Natural killer cell (primary cell): ENCODE measurements at regions of chr10 and their contacts with region 1.

Region 1: DNA sequence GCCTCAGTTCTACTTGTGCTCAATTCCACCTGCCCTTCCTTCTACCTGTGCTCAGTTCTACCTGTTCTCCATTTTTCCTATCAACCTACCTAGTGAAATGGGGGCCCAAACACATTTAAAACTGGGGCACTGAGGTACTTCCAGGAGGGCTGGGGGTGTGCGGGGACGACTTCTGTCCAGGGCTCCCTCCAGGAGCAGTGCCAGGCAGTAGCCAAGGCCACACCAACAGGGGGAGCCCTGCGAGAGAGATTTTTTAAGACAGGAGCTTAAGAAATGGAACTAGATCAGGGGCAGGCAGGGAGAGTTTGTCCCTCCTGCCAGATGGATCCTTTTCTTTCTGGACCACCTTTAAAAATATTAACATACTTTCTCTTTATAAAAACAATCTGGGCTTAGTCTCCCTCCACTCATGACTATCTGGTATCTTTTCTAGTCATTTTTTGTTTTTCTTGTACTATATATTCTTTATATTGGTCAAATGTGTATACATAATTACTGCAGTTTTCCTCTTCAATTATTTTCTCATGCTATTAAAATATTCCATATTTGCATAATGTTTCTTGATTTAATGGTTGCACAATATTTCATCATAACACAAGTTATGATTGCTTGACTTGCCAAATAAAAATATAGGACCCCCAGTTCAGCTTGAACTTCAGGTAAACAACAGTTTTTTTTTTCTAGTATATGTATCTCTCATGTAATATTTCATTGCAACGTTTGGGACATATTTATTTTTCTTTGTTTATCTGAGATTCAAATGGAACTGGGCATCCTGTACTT is 47.3 kb upstream of the INSYN2A start:
- DNase-seq: peak; percentile 55 to 59
- ATAC-seq: peak; percentile 81 to 93 (median 85)
- H3K4me3 ChIP-seq: no peak overlapping the region
- H3K4me3 Mint-ChIP-seq: no peak overlapping the region
- H3K27ac ChIP-seq: no peak overlapping the region
- H3K27ac Mint-ChIP-seq: peak overlapping the region in 1 of 2 donors; percentile 21
- H3K4me1 ChIP-seq: no peaks in the 10 kb centered on the region
- H3K4me1 Mint-ChIP-seq: peaks cover 21 to 32% of the 10 kb centered on the region in 2 donors
- H3K27me3 ChIP-seq: no peaks in the 10 kb centered on the region
- H3K27me3 Mint-ChIP-seq: peaks cover 4 to 6% of the 10 kb centered on the region in 2 donors
- CTCF ChIP-seq: peak; percentile 76

Region 2: GRCh38 chr10:127346604-127347003 is 102.9 kb after region 1 on chr10:
- intact Hi-C with region 1: loop called (anchors 2 kb)
- DNase-seq: no peak
- ATAC-seq: no peak
- H3K4me3 ChIP-seq: no peak overlapping the region
- H3K4me3 Mint-ChIP-seq: no peak overlapping the region
- H3K27ac ChIP-seq: no peak overlapping the region
- H3K27ac Mint-ChIP-seq: no peak overlapping the region
- H3K4me1 ChIP-seq: no peaks in the 10 kb centered on the region
- H3K4me1 Mint-ChIP-seq: peaks cover 0 to 12% of the 10 kb centered on the region in 2 donors
- H3K27me3 ChIP-seq: no peaks in the 10 kb centered on the region
- H3K27me3 Mint-ChIP-seq: peaks cover 0 to 2% of the 10 kb centered on the region in 2 donors
- CTCF ChIP-seq: no peak

Region 3: GRCh38 chr10:127354992-127355391 is 111.3 kb after region 1 on chr10:
- intact Hi-C with region 1: loop called (anchors 1 kb)
- DNase-seq: peak in 1 of 2 donors; percentile 7
- ATAC-seq: no peak
- H3K4me3 ChIP-seq: no peak overlapping the region
- H3K4me3 Mint-ChIP-seq: no peak overlapping the region
- H3K27ac ChIP-seq: no peak overlapping the region
- H3K27ac Mint-ChIP-seq: no peak overlapping the region
- H3K4me1 ChIP-seq: peaks cover 1% of the 10 kb centered on the region
- H3K4me1 Mint-ChIP-seq: peaks cover 4 to 16% of the 10 kb centered on the region in 2 donors
- H3K27me3 ChIP-seq: no peaks in the 10 kb centered on the region
- H3K27me3 Mint-ChIP-seq: peaks cover 2 to 4% of the 10 kb centered on the region in 2 donors
- CTCF ChIP-seq: peak; percentile 58

Region 4: DNA sequence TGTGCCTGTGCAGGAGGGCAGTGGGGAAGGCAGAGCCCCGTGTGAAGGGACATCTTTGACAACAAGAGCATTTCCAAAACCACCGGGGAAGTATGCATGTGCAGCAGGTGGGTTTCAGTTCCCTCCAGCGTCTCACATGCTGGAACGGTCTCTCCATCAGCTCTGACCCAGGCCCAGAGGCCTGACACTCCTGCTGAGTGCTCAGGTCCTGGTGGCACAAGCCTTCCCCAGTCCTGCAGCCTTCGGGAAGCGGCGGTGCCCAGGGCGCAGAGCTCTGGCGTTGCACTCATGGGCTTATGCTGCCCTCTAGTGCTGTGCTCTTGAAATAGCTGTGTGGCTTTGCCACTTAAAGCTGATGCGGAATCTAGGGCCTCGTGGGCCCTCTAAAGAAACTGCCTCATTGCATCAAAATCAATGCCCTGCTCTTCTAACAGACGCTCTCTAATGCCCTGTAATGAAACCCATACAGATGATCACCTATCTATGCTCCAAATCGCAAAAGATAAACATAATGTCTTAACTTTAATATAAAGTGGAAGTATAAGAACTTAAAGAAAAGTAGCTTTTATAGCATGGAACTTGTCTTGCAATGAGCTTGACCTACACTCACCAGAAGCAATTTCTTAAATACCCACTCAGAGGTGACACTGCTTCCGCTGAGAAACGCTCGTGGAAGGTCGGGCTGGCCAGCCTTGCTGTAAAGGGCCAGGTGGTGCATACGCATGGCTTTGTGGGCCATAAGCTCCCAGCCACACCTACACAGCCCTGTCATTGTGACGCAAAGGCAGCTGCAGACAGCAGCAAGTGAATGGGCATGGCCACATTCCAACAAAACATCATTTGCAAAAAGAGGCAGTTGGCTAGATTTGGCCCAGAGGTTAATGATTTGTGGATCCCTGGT is 610.4 kb after region 1 on chr10:
- intact Hi-C with region 1: loop called (anchors 5 kb)
- DNase-seq: peak; percentile 42 to 71
- ATAC-seq: peak; percentile 78 to 92 (median 79)
- H3K4me3 ChIP-seq: no peak overlapping the region
- H3K4me3 Mint-ChIP-seq: no peak overlapping the region
- H3K27ac ChIP-seq: no peak overlapping the region
- H3K27ac Mint-ChIP-seq: no peak overlapping the region
- H3K4me1 ChIP-seq: peaks cover 22% of the 10 kb centered on the region
- H3K4me1 Mint-ChIP-seq: peaks cover 8% of the 10 kb centered on the region in 2 donors
- H3K27me3 ChIP-seq: peaks cover 3% of the 10 kb centered on the region
- H3K27me3 Mint-ChIP-seq: peaks cover 16% of the 10 kb centered on the region in 2 donors
- CTCF ChIP-seq: peak; percentile 78